ENCODE measurements at regions of chr12 and their contacts with region 1.

Region 1: GRCh38 chr12:56104109-56104814 is at the start of gene PA2G4:
- DNase-seq: peak; percentile 95 to 99
- H3K4me3 ChIP-seq: peak within 1 kb of the TSS; percentile 81 to 95 (median 92)
- H3K27ac ChIP-seq: peak within 1 kb of the TSS; percentile 88; the same call in 1 of the 2 replicates
- H3K4me1 ChIP-seq: peaks cover 0 to 9% (median 3%) of the 10 kb centered on the region in 4 experiments; a peak in 5 of 7 replicates
- H3K27me3 ChIP-seq: no peaks in the 10 kb centered on the region
- CTCF ChIP-seq: no peak
- EP300 ChIP-seq: no peak
- POLR2A ChIP-seq: peak; percentile 69 to 70; a peak in 2 of 3 replicates
- RAD21 ChIP-seq: no peak
- total RNA-seq, gene PA2G4: 237 and 242 TPM in 2 replicates

Region 2: DNA sequence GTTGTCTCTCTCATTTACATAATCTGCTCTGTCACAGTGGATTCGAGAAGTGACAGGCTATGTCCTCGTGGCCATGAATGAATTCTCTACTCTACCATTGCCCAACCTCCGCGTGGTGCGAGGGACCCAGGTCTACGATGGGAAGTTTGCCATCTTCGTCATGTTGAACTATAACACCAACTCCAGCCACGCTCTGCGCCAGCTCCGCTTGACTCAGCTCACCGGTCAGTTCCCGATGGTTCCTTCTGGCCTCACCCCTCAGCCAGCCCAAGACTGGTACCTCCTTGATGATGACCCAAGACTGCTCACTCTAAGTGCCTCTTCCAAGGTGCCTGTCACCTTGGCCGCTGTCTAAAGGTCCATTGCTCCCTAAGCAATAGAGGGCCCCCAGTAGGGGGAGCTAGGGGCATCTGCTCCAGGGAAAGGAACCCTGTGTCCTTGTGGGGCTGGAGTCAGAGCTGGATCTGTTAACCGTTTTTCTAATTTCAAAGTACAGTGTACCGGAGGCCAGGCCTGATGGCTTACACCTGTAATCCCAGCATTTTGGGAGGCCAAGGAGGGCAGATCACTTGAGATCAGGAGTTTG is 19.2 kb before region 1 on chr12:
- CTCF ChIA-PET with region 1: interaction called, 31 read pairs
- POLR2A ChIA-PET with region 1: interaction called, 112 read pairs
- DNase-seq: peak in 1 of 2 experiments; percentile 75
- H3K4me3 ChIP-seq: no peak overlapping the region
- H3K27ac ChIP-seq: no peak overlapping the region
- H3K4me1 ChIP-seq: peaks cover 3 to 13% (median 10%) of the 10 kb centered on the region in 4 experiments
- H3K27me3 ChIP-seq: no peaks in the 10 kb centered on the region
- CTCF ChIP-seq: peak; percentile 73 to 80 (median 75)
- EP300 ChIP-seq: no peak
- POLR2A ChIP-seq: no peak
- RAD21 ChIP-seq: peak; percentile 43 to 59

Region 3: GRCh38 chr12:56127888-56128669 is 23.8 kb after region 1 on chr12 and contains the start of gene ESYT1:
- CTCF ChIA-PET with region 1: interaction called, 7 read pairs
- POLR2A ChIA-PET with region 1: interaction called, 24 read pairs
- DNase-seq: peak; percentile 97 to 100
- H3K4me3 ChIP-seq: peak within 1 kb of the TSS; percentile 79 to 95 (median 90)
- H3K27ac ChIP-seq: peak within 1 kb of the TSS; percentile 88
- H3K4me1 ChIP-seq: peaks cover 0 to 13% (median 5%) of the 10 kb centered on the region in 4 experiments; a peak in 5 of 7 replicates
- H3K27me3 ChIP-seq: no peaks in the 10 kb centered on the region
- CTCF ChIP-seq: no peak
- EP300 ChIP-seq: peak in 1 of 2 experiments; percentile 57; a peak in 1 of 3 replicates
- POLR2A ChIP-seq: peak; percentile 93 to 96
- RAD21 ChIP-seq: no peak; a peak in 1 of 4 replicates
- total RNA-seq, gene ESYT1: 85.1 and 86.9 TPM in 2 replicates

Region 4: DNA sequence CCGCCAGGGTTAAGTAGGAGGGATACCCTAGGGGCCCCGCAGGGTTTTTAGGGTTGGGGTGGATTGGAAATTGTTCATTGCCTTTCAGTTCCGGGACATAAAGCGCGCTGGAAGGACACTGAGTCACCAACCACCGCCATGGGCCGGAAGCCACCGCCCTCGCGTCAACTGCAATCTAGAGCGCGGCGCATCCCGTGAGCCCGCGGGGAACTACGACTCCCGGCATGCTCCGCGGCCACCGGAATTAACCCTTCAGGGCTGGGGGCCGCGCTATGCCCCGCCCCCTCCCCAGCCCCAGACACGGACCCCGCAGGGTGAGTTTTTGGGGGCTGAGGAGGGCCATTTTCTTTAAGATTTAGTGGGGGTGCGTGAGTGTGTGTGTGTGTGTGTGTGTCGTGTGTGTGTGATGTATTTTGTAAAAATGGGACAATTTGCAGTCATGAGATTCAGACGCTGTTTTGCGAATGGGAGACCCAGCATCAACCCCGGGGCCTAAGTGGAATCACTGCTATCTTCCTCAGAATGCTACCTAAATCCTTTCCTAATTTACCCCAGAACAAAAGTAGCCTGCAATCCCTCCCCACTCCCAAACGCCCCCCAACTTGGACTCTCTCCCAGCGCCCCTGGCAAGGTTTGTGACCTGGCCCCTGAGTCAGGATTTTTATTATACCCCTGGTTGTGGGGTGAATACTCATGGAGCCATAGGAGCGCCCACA is 48.2 kb after region 1 on chr12 and contains the start of gene MYL6B:
- CTCF ChIA-PET with region 1: no interaction called
- POLR2A ChIA-PET with region 1: interaction called, 10 read pairs
- DNase-seq: peak; percentile 66 to 91
- H3K4me3 ChIP-seq: peak within 1 kb of the TSS; percentile 66 to 84 (median 82)
- H3K27ac ChIP-seq: no peak within 1 kb of the TSS
- H3K4me1 ChIP-seq: peaks cover 5 to 13% (median 9%) of the 10 kb centered on the region in 4 experiments; a peak in 6 of 7 replicates
- H3K27me3 ChIP-seq: no peaks in the 10 kb centered on the region; a peak in 1 of 7 replicates
- CTCF ChIP-seq: no peak
- EP300 ChIP-seq: no peak
- POLR2A ChIP-seq: peak; percentile 46 to 59; a peak in 1 of 3 replicates
- RAD21 ChIP-seq: no peak
- total RNA-seq, gene MYL6B: 162 and 163 TPM in 2 replicates

Region 5: DNA sequence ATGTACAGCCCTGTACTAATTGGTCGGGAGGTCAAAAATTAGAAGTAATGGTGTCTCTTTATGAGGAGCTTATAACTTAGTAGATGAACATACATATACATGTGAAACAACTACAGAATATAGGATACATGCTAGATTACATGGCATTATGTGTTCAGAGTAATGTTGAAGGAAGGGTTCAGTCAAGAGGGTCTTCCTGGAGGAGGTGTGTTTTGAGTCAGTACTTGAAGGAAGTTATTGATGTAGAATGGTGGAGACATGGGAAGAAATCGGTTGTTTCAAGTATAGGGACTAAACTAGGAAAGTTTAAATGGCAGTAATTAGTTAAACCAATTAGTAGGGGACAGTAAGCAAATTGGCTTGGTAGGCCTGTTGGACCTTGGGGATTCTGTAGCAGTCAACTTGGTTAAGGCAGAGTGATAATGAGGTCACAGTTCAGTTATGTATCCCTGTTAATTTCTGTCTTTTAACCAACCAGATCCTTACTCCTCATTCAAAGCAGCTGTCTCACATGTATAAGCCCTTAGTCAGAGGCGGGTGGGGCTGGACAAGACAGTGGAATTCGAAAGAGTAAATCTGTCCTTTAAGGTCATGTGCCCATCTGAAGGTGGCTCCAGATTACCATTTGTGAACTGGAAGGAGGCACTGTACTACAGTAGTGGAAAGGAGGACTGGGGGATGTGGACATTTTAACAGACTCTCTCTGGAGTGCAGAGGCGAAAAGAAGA is 157.4 kb after region 1 on chr12:
- CTCF ChIA-PET with region 1: no interaction called
- POLR2A ChIA-PET with region 1: no interaction called
- DNase-seq: no peak
- H3K4me3 ChIP-seq: no peak overlapping the region
- H3K27ac ChIP-seq: no peak overlapping the region
- H3K4me1 ChIP-seq: peaks cover 3 to 13% (median 8%) of the 10 kb centered on the region in 4 experiments
- H3K27me3 ChIP-seq: no peaks in the 10 kb centered on the region
- CTCF ChIP-seq: no peak
- EP300 ChIP-seq: no peak
- POLR2A ChIP-seq: no peak
- RAD21 ChIP-seq: no peak

Region 6: DNA sequence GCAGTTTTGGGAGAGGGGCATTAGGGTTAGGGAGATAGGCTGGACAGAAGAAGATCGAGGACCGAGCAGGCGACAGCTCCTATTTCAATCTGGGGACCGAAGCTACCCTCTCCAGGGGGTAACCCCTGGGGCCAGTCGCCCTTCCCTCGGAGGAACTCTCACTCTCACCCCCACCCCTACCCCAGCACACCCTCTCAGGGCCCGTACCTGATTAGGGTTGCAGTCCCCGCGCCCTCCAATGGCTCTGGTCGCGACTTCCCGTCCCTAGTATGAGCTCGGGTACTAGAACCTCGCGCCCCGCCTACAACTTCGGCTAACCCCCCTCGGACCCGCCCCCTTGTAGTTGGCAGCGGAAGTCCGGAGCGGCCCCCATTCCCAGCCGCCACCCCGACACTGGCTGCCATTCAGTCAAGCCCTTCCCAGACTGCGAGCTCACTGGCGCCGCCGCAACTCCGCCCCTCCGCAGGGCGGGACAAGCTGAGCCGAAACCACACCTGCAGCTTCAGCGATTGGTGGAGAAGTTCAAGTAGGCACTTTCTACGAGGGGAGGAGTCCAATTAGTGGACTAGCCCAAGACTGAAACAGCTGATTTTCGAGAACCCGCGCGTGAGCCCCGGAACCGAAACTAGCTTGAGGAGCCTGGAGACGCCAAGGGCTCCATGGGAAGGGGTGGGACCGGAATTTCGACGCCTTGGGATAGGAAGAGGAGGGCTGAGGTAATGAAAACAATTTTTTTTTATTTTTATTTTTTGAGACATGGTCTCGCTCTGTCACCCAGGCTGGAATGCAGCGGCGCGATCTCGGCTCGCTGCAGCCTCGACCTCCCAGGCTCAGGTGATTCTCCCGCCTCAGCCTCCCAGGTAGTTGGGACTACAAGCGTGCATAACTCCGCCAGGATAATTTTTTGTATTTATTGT is 255.8 kb after region 1 on chr12 and contains the start of gene STAT2:
- CTCF ChIA-PET with region 1: no interaction called
- POLR2A ChIA-PET with region 1: no interaction called
- DNase-seq: peak; percentile 98 to 99
- H3K4me3 ChIP-seq: peak within 1 kb of the TSS; percentile 78 to 88 (median 84)
- H3K27ac ChIP-seq: peak within 1 kb of the TSS; percentile 70
- H3K4me1 ChIP-seq: peaks cover 0 to 5% (median 2%) of the 10 kb centered on the region in 4 experiments; a peak in 4 of 7 replicates
- H3K27me3 ChIP-seq: peaks cover 0 to 3% (median 0%) of the 10 kb centered on the region in 4 experiments; a peak in 1 of 7 replicates
- CTCF ChIP-seq: no peak
- EP300 ChIP-seq: peak; percentile 65 to 71; a peak in 2 of 3 replicates
- POLR2A ChIP-seq: peak in 1 of 2 experiments; percentile 56; a peak in 2 of 3 replicates
- RAD21 ChIP-seq: no peak
- total RNA-seq, gene STAT2: 42.4 and 44.7 TPM in 2 replicates

Measured in H1 (cell line).